ENCODE measurements at regions of chr2 and their contacts with region 1.

Region 1: DNA sequence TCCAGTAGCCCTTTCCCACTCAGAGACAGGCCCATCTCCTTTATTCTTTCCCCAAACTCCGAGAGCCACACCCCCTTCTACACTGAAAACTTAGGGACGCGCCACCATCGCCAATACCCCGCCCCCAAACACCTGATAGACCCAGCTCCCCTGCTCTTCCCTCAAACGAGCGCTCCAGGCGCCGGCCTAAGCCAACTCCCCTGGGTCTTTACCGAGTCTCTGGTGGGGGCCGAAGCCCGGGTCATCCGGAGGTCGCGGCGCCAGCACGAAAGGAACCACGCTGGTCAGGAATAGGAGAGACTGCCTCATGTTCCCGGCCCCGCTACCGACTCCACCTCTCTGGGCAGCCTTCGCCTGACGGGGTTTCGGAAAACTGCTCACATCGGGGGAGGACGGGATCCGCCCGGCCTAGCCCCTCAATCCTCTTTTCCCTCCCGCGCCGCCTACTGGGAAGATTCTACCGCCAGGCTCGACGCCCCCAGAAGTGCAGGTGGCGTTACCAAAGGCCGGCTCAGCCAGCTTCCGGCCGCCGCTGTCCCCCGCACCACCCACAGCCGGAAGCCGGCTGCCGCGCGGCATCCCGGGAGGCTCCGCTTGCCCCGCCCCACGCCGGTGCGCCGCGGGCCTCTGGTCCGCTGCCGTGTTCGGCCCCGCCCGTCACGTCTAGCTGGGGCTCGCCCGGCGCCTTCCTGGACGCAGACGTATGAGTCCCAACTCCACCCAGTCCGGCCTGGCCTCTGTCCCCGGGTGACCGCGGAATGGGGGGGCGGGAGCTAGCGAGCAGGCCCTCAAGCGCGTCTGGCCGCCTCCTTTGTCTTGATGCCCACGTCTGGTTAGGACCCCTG is at the start of gene ADAM17:
- DNase-seq: peak; percentile 97
- H3K4me3 Mint-ChIP-seq: peak within 1 kb of the TSS; percentile 96
- H3K27ac Mint-ChIP-seq: peak within 1 kb of the TSS; percentile 93
- H3K4me1 Mint-ChIP-seq: peaks cover 48% of the 10 kb centered on the region
- H3K27me3 Mint-ChIP-seq: no peaks in the 10 kb centered on the region
- total RNA-seq, gene ADAM17: 25.6 and 26.5 TPM in 2 replicates

Region 2: DNA sequence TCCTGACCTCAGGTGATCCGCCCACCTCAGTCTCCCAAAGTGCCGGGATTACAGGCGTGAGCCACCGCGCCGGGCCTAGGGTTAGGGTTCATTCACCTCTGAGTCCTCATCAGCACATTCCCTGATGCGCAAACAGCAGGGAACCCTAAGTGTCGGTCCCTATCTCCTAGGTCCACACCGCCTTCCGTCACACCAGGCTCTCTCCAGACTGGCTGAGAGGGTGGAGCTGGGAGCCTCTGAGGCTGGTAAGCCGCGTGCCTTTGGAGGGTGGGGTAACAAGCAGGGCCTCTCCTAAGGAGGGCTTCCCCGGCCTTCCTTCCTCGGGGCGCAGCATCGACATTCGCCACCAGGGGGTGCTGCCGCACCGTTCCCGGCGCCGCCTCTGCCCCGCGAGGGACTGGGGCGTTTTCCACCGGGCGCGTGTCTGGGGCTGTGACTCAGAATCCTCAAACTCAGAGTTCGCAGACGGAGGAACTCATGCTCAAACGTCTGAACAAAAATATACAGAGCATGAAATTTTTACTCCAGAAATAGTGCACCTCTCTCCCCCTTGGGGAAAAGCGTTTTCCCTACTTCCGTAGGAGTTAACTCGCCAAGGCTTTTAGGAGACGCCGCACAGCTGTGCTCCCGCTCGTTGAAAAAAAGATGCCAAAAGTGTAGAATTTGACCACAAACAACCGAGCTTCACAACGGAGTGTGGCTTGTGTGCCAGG is 412.8 kb before region 1 on chr2:
- intact Hi-C with region 1: loop called (anchors 5 kb)
- DNase-seq: peak; percentile 94
- H3K4me3 Mint-ChIP-seq: peak overlapping the region; percentile 55
- H3K27ac Mint-ChIP-seq: no peak overlapping the region
- H3K4me1 Mint-ChIP-seq: peaks cover 4% of the 10 kb centered on the region
- H3K27me3 Mint-ChIP-seq: peaks cover 19% of the 10 kb centered on the region

Region 3: DNA sequence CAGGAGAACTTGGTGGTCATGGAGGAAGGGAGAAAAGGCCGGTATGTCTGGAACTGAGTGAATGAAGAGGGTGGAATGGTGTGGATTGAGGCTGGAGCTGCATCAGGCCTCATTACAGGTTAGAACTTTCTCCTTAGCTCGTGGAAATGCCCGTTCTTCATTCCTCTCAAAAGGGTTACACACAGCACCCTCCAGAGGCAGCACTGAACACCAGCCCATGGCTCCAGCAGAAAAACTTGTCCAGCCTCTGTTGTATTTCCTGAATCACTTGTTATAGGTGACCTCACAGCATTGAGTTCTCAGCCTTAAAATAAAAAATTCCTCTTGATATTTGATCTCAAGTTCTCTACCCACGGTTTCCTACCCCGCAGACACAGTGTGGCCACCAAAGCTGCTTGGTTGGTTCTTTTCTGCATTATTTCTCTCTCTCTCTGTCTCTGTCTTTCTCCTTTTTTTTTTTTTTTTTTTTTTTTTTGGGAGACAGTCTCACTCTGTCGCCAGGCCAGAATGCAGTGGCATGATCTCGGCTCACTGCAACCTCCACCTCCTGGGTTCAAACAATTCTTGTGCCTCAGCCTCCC is 221.8 kb before region 1 on chr2:
- intact Hi-C with region 1: no loop called
- DNase-seq: no peak
- H3K4me3 Mint-ChIP-seq: no peak overlapping the region
- H3K27ac Mint-ChIP-seq: no peak overlapping the region
- H3K4me1 Mint-ChIP-seq: no peaks in the 10 kb centered on the region
- H3K27me3 Mint-ChIP-seq: peaks cover 10% of the 10 kb centered on the region

Region 4: DNA sequence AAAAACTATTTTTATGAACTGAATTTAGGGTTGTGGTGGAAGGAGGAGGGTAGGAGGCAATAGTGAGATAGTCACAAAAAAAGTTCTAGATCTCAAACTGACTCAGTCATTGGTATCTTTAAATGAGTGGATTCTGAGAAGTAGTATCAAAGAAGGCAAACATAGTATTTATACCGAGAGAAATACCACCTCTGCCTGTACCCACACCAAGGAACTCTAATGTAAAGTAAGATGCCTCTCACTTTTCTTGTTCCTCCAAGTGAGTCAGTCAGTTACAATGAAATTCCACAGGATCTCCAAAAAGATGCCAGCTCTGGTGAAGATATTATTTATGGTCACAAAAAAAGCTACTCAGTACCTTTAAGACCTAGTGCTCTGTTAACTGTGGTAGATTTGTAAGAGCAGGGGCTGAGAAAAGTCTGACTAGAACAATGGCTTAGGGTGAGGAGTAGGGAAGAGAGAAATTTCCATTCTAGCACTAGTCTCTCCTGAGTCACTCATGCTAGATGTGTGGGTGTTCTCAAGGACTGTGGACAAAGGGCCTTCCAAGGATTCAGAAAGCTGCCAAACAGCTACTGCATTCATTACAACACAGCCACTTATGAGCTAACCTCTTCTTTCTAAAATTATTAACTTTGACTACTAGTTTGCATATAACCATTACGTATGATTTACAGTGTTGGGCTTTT is 39.0 kb after region 1 on chr2:
- intact Hi-C with region 1: loop called (anchors 1 kb)
- DNase-seq: no peak
- H3K4me3 Mint-ChIP-seq: peak overlapping the region; percentile 22
- H3K27ac Mint-ChIP-seq: peak overlapping the region; percentile 81
- H3K4me1 Mint-ChIP-seq: peaks cover 52% of the 10 kb centered on the region
- H3K27me3 Mint-ChIP-seq: no peaks in the 10 kb centered on the region

Region 5: GRCh38 chr2:9656270-9656766 is 100.8 kb after region 1 on chr2:
- intact Hi-C with region 1: loop called (anchors 1 kb)
- DNase-seq: peak; percentile 88
- H3K4me3 Mint-ChIP-seq: peak overlapping the region; percentile 25
- H3K27ac Mint-ChIP-seq: peak overlapping the region; percentile 93
- H3K4me1 Mint-ChIP-seq: peaks cover 46% of the 10 kb centered on the region
- H3K27me3 Mint-ChIP-seq: peaks cover 16% of the 10 kb centered on the region

Region 6: GRCh38 chr2:9668722-9669340 is 113.3 kb after region 1 on chr2:
- intact Hi-C with region 1: no loop called
- DNase-seq: no peak
- H3K4me3 Mint-ChIP-seq: no peak overlapping the region
- H3K27ac Mint-ChIP-seq: no peak overlapping the region
- H3K4me1 Mint-ChIP-seq: peaks cover 6% of the 10 kb centered on the region
- H3K27me3 Mint-ChIP-seq: peaks cover 17% of the 10 kb centered on the region

Region 7: GRCh38 chr2:9782197-9782719 is 226.7 kb after region 1 on chr2:
- intact Hi-C with region 1: loop called (anchors 2 kb)
- DNase-seq: peak; percentile 94
- H3K4me3 Mint-ChIP-seq: peak overlapping the region; percentile 46
- H3K27ac Mint-ChIP-seq: peak overlapping the region; percentile 98
- H3K4me1 Mint-ChIP-seq: peaks cover 52% of the 10 kb centered on the region
- H3K27me3 Mint-ChIP-seq: no peaks in the 10 kb centered on the region

Region 8: GRCh38 chr2:10122386-10123280 is 567.1 kb after region 1 on chr2 and contains the start of gene RRM2:
- intact Hi-C with region 1: loop called (anchors 5 kb)
- DNase-seq: peak; percentile 98
- H3K4me3 Mint-ChIP-seq: peak within 1 kb of the TSS; percentile 94
- H3K27ac Mint-ChIP-seq: peak within 1 kb of the TSS; percentile 97
- H3K4me1 Mint-ChIP-seq: peaks cover 54% of the 10 kb centered on the region
- H3K27me3 Mint-ChIP-seq: no peaks in the 10 kb centered on the region
- total RNA-seq, gene RRM2: 378 and 383 TPM in 2 replicates

Measured in activated CD4-positive, alpha-beta T cell treated with anti-CD3 and anti-CD28 coated beads, Interleukin-2, amount 10 ng/mL, durations not matched to agents 24 days and 14 days (primary cell).